ENCODE measurements at regions of chr17 and their contacts with region 1.

Region 1: DNA sequence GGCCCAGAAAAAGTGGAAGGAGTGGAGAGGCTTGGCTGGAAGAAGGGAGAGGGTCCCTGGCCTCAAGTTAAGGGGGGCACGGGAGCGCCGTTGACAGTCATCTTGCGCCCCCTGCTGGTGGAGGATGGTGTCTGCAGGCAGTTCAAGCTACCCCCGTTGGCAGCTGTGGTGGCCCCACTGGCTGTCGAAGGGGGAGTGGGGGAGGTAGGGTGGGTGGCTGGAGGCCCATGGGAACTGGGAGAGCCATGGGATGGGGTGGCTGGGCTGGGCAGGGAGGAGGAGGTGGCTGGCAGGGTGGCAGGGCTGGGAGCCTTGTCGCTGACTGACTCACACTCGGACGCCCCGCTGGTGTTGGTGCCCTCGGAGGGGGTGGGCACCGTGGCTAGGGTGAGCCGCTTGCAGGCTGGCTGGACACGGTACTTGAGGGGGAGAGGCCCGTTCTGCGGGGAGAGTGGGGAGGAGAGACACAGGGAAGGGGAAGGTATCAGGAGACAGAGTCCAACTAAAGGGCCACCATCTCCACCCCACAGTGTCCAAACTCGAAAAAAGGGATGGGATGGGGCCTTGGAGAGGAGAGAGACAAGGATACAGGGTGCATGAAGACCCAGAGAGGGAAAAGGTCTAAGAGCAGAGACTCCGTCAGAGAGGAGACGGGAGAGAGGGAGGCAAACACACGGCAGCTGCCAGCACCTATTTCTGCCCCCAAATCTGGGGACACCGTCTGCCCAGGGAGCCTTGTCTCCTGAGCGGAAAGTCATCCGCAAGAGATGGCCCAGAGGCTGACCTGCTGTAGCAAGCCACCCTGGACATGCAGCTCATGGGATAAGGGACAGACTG is 5.2 kb downstream of the CISD3 start:
- DNase-seq: peak in 1 of 2 donors; percentile 78
- H3K4me3 ChIP-seq: no peak overlapping the region
- H3K27ac ChIP-seq: peak overlapping the region; percentile 28 to 53
- H3K4me1 ChIP-seq: peaks cover 0 to 41% (median 35%) of the 10 kb centered on the region in 4 donors
- H3K27me3 ChIP-seq: no peaks in the 10 kb centered on the region
- CTCF ChIP-seq: peak; percentile 89 to 90

Region 2: DNA sequence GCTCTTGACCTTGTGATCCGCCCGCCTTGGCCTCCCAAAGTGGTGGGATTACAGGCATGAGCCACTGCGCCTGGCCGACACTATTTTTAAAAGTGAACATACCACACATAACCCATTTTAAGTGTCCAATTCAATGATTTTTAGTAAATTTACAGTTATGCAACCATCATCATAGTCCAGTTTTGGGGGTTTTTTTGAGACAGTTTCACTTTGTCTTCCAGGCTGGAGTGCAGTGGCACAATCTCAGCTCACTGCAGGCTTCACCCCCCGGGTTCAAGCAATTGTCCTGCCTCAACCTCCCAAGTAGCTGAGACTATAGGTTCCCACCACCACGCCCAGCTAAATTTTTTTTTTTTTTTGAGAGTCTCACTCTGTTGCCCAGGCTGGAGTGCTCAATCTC is 57.6 kb before region 1 on chr17:
- intact Hi-C with region 1: loop called (anchors 2 kb)
- DNase-seq: no peak
- H3K4me3 ChIP-seq: no peak overlapping the region
- H3K27ac ChIP-seq: no peak overlapping the region
- H3K4me1 ChIP-seq: peaks cover 0 to 33% (median 26%) of the 10 kb centered on the region in 4 donors
- H3K27me3 ChIP-seq: peaks cover 3 to 39% of the 10 kb centered on the region in 2 donors
- CTCF ChIP-seq: no peak

Region 3: DNA sequence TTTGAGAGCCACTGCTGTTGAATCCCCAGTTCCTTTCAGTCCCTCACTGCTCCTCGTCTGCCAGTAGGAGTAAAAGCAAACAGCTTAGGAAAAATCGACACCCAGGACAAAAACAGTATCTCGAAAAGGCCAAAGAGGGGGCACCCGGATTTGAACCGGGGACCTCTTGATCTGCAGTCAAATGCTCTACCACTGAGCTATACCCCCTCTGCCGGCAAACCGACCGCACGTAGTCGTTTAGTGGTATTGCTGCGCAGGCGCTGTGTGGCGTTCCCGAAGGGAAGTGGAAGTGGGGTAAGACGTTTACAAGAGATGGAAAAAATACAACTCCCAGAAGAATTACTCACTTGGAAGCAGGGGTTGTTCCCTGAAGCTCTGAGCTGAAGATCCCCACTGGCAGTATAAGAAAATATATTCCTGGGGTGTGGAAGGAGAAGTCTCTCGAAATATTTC is 418.2 kb after region 1 on chr17:
- intact Hi-C with region 1: no loop called
- DNase-seq: peak; percentile 95 to 96
- H3K4me3 ChIP-seq: peak overlapping the region; percentile 62 to 73
- H3K27ac ChIP-seq: peak overlapping the region; percentile 89 to 94
- H3K4me1 ChIP-seq: peaks cover 0 to 26% (median 20%) of the 10 kb centered on the region in 4 donors
- H3K27me3 ChIP-seq: peaks cover 0 to 21% of the 10 kb centered on the region in 2 donors
- CTCF ChIP-seq: peak; percentile 25 to 41